ENCODE measurements at regions of chr14 and their contacts with region 1.

Region 1: GRCh38 chr14:44846232-44846824 is 115.4 kb downstream of the KLHL28 start:
- DNase-seq: no peak
- H3K4me3 ChIP-seq: no peak overlapping the region
- H3K27ac ChIP-seq: no peak overlapping the region
- H3K4me1 ChIP-seq: no peaks in the 10 kb centered on the region
- H3K27me3 ChIP-seq: no peaks in the 10 kb centered on the region
- CTCF ChIP-seq: peak in 2 of 3 experiments; percentile 58 to 85; a peak in 2 of 4 replicates
- EP300 ChIP-seq: no peak
- POLR2A ChIP-seq: no peak
- RAD21 ChIP-seq: peak; percentile 90 to 91

Region 2: DNA sequence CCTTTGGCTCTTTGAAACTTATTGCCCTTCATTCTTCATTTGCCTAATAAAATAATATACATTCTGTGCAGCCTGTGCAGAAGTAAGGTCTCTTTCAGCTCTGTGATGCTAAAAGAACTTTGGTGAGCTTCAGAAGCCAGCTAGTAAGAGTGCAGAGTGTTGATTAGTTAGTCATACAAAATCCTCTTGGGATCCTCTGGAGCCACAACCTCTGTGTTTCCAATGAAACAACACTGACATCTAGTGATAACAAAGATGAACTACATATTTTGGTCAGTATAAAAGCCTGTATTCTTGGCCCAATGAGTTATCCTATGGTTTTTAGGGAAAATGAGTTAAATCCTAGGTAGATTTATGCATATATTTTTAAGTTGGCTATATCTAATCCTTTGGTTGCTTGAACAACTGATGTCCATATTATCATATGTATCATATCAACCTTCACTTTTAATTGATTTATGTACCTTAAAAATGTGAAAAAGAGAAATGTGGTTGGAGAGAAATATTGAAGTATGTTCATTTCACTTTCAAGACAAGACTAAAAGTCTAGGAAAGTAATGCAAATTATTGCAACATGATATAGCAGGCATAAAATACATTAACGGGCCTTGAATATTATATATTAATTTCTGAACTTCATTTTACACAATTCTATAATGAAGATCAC is 43.0 kb before region 1 on chr14:
- CTCF ChIA-PET with region 1: interaction called, 13 read pairs
- POLR2A ChIA-PET with region 1: no interaction called
- DNase-seq: no peak
- H3K4me3 ChIP-seq: no peak overlapping the region
- H3K27ac ChIP-seq: no peak overlapping the region
- H3K4me1 ChIP-seq: no peaks in the 10 kb centered on the region
- H3K27me3 ChIP-seq: no peaks in the 10 kb centered on the region
- CTCF ChIP-seq: peak in 2 of 3 experiments; percentile 52 to 57; a peak in 3 of 4 replicates
- EP300 ChIP-seq: no peak
- POLR2A ChIP-seq: no peak
- RAD21 ChIP-seq: peak; percentile 91 to 92

Measured in H1 (cell line).